AG04449 (cell line): ENCODE measurements at regions of chr16 and their contacts with region 1.

Region 1: DNA sequence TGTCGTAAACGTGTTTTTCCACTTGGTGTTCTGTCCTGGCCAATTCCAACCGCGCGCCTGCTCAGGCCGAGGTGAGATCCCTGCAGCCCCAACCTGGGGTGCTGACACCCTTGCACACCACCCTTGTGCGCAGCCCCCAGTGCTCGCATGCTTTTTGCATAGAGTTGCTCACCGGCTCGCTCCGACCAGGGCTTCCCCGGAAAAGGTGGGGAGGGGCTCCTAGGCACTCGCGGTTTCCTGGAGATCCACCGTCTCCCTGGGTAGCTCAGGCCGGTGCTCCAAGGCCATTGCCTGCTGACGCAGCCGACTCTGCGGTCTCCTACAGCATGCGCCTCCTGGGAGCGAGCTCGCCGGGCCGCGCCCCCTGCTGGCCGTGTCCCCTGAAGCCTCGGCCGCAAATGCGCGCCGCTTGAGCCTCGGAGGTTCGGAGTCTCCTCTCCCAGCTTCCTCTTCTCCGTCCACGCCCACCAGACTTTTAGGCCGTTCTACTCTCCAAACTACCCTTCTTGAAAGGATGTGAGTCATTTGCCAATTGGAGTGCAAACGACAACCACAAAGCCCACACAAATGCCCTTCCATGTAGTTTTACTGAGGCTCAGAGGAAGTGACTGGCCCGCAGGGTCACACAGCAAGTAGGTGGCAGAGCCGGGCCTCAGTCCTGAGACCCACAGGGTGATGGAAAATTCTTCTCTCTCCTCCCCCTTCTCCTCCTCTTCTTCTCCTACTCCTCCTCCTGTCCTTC is 7.2 kb upstream of the PDP2 start:
- DNase-seq: peak; percentile 95
- H3K4me3 ChIP-seq: peak overlapping the region; percentile 51
- CTCF ChIP-seq: peak; percentile 99

Region 2: DNA sequence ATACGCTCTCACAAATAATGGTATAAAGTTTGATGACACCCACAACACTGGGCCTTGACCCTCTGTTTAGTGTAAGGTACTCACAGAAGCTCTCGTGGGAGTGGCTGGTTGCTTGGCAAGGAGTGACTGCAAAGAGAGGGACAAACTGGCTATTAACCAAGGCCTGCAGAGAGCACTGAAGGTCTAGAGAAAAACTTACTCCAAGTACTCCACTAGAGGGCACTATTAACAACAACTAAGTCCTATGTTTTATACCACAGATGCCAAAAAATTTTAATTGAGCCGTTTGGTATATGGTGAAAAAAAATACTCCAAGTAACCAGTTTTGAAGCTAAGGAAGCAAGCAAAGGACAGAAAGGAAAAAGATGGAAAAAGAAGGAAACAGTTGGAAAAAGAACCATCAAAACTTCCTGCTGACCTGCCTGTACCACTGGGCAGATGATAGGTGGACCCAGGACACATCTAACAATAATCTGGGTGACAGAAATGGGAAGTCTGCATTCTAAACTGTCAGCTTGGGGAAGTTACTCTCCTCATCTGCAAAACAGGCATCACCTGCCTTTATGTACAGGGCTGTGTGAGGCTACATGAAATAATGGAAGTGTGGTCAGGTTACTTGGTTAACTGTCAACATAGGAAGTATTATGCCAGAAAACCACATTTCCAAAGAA is 144.9 kb before region 1 on chr16:
- CTCF ChIA-PET with region 1: interaction called, 35 read pairs
- POLR2A ChIA-PET with region 1: no interaction called
- DNase-seq: no peak
- H3K4me3 ChIP-seq: no peak overlapping the region
- CTCF ChIP-seq: peak; percentile 51

Region 3: GRCh38 chr16:66824006-66824405 is 49.1 kb before region 1 on chr16:
- CTCF ChIA-PET with region 1: interaction called, 203 read pairs
- POLR2A ChIA-PET with region 1: no interaction called
- DNase-seq: no peak
- H3K4me3 ChIP-seq: no peak overlapping the region
- CTCF ChIP-seq: no peak

Region 4: GRCh38 chr16:66858740-66859396 is 14.2 kb before region 1 on chr16:
- CTCF ChIA-PET with region 1: interaction called, 96 read pairs
- POLR2A ChIA-PET with region 1: no interaction called
- DNase-seq: no peak
- H3K4me3 ChIP-seq: no peak overlapping the region
- CTCF ChIP-seq: no peak